ENCODE measurements at regions of chr2 and their contacts with region 1.

Region 1: GRCh38 chr2:171271971-171272436 is 111.3 kb upstream of the TLK1 start:
- DNase-seq: peak; percentile 98
- ATAC-seq: peak; percentile 99
- H3K4me3 ChIP-seq: peak overlapping the region; percentile 19; the same call in 1 of the 2 replicates
- H3K27ac ChIP-seq: peak overlapping the region; percentile 61
- H3K4me1 ChIP-seq: peaks cover 24% of the 10 kb centered on the region
- H3K27me3 ChIP-seq: no peaks in the 10 kb centered on the region
- CTCF ChIP-seq: no peak

Region 2: GRCh38 chr2:171034315-171034714 is 237.7 kb before region 1 on chr2:
- CTCF ChIA-PET with region 1: no interaction called
- POLR2A ChIA-PET with region 1: no interaction called
- intact Hi-C with region 1: no loop called
- DNase-seq: peak; percentile 29
- ATAC-seq: peak; percentile 81
- H3K4me3 ChIP-seq: no peak overlapping the region
- H3K27ac ChIP-seq: no peak overlapping the region
- H3K4me1 ChIP-seq: no peaks in the 10 kb centered on the region; the same call in 1 of the 2 replicates
- H3K27me3 ChIP-seq: no peaks in the 10 kb centered on the region
- CTCF ChIP-seq: no peak

Region 3: GRCh38 chr2:171225302-171225980 is 46.6 kb before region 1 on chr2:
- CTCF ChIA-PET with region 1: no interaction called
- POLR2A ChIA-PET with region 1: no interaction called
- intact Hi-C with region 1: loop called (anchors 1 kb)
- DNase-seq: peak; percentile 93
- ATAC-seq: peak; percentile 86
- H3K4me3 ChIP-seq: no peak overlapping the region
- H3K27ac ChIP-seq: no peak overlapping the region
- H3K4me1 ChIP-seq: peaks cover 46% of the 10 kb centered on the region
- H3K27me3 ChIP-seq: no peaks in the 10 kb centered on the region
- CTCF ChIP-seq: peak; percentile 47

Region 4: GRCh38 chr2:171390941-171391516 is 119.0 kb after region 1 on chr2:
- CTCF ChIA-PET with region 1: no interaction called
- POLR2A ChIA-PET with region 1: no interaction called
- intact Hi-C with region 1: loop called (anchors 5 kb)
- DNase-seq: peak; percentile 95
- ATAC-seq: peak; percentile 90
- H3K4me3 ChIP-seq: peak overlapping the region; percentile 48
- H3K27ac ChIP-seq: peak overlapping the region; percentile 96
- H3K4me1 ChIP-seq: peaks cover 35% of the 10 kb centered on the region
- H3K27me3 ChIP-seq: no peaks in the 10 kb centered on the region
- CTCF ChIP-seq: no peak

Region 5: GRCh38 chr2:171433763-171434670 is 162.0 kb after region 1 on chr2 and contains the starts of genes DCAF17 and METTL8:
- CTCF ChIA-PET with region 1: no interaction called
- POLR2A ChIA-PET with region 1: no interaction called
- intact Hi-C with region 1: loop called (anchors 1 kb)
- DNase-seq: peak; percentile 97
- ATAC-seq: peak; percentile 94
- H3K4me3 ChIP-seq: peak within 1 kb of the TSS; percentile 90
- H3K27ac ChIP-seq: peak within 1 kb of the TSS; percentile 90
- H3K4me1 ChIP-seq: peaks cover 19% of the 10 kb centered on the region
- H3K27me3 ChIP-seq: no peaks in the 10 kb centered on the region
- CTCF ChIP-seq: peak; percentile 36; the same call in 1 of the 2 replicates
- total RNA-seq, gene DCAF17: 7.4 and 11.1 TPM in 2 replicates
- total RNA-seq, gene METTL8: 8.1 and 10.8 TPM in 2 replicates